B cell (primary cell): ENCODE measurements at regions of chr3 and their contacts with region 1.

Region 1: GRCh38 chr3:114213627-114214541 is 23.5 kb downstream of the ZNF80 start:
- DNase-seq: peak; percentile 92
- ATAC-seq: peak; percentile 76
- H3K4me3 ChIP-seq: peak overlapping the region; percentile 42 to 76 (median 69)
- H3K4me3 Mint-ChIP-seq: no peak overlapping the region
- H3K27ac ChIP-seq: peak overlapping the region; percentile 95 to 98
- H3K27ac Mint-ChIP-seq: no peak overlapping the region
- H3K4me1 ChIP-seq: peaks cover 66 to 71% of the 10 kb centered on the region in 2 donors
- H3K4me1 Mint-ChIP-seq: peaks cover 28% of the 10 kb centered on the region
- H3K27me3 ChIP-seq: no peaks in the 10 kb centered on the region
- H3K27me3 Mint-ChIP-seq: no peaks in the 10 kb centered on the region
- CTCF ChIP-seq: no peak

Region 2: GRCh38 chr3:113531826-113532697 is 681.8 kb before region 1 on chr3 and contains the start of gene SIDT1:
- CTCF ChIA-PET with region 1: no interaction called
- POLR2A ChIA-PET with region 1: no interaction called
- intact Hi-C with region 1: loop called (anchors 5 kb)
- DNase-seq: peak; percentile 89
- ATAC-seq: peak; percentile 81
- H3K4me3 ChIP-seq: peak within 1 kb of the TSS; percentile 86 to 96 (median 95)
- H3K4me3 Mint-ChIP-seq: peak within 1 kb of the TSS; percentile 93
- H3K27ac ChIP-seq: peak within 1 kb of the TSS; percentile 86 to 87
- H3K27ac Mint-ChIP-seq: peak within 1 kb of the TSS; percentile 96
- H3K4me1 ChIP-seq: peaks cover 35 to 36% of the 10 kb centered on the region in 2 donors
- H3K4me1 Mint-ChIP-seq: peaks cover 46% of the 10 kb centered on the region
- H3K27me3 ChIP-seq: no peaks in the 10 kb centered on the region
- H3K27me3 Mint-ChIP-seq: peaks cover 6% of the 10 kb centered on the region
- CTCF ChIP-seq: no peak
- total RNA-seq, gene SIDT1: 75.4 and 84.4 TPM in 2 replicates

Region 3: DNA sequence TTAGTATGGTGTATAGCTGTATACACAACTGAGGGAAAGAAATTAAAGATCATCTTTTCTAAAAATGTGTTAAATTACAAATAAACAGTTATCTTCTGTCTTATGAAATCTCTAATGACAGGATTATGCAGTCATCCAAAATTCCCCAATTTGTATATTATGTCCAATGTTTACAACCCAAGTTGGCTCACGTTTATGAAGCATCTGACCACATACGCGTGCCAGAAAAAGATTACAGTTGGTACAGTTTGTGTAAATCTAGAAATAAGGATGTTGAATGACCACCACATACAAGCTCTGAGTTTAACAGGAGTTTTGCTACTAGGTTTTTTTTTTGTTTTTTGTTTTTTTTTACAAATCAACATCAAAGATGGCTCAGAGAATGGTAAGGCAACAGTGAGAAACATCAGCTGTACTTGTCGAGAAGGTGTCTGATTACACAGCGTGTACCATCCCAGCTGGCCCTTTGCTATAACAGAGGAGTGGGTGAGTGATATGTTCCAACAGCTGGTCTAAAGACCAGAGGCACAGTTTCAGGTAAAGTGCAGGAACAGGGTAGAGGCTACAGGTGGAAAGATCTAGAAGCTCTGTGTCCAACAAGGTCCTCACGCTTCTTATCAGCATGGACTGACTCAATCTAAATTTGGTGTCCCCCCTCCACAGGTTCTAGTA is 564.6 kb before region 1 on chr3:
- CTCF ChIA-PET with region 1: no interaction called
- POLR2A ChIA-PET with region 1: no interaction called
- intact Hi-C with region 1: no loop called
- DNase-seq: no peak
- ATAC-seq: no peak
- H3K4me3 ChIP-seq: no peak overlapping the region
- H3K4me3 Mint-ChIP-seq: no peak overlapping the region
- H3K27ac ChIP-seq: no peak overlapping the region
- H3K27ac Mint-ChIP-seq: no peak overlapping the region
- H3K4me1 ChIP-seq: no peaks in the 10 kb centered on the region
- H3K4me1 Mint-ChIP-seq: peaks cover 21% of the 10 kb centered on the region
- H3K27me3 ChIP-seq: no peaks in the 10 kb centered on the region
- H3K27me3 Mint-ChIP-seq: no peaks in the 10 kb centered on the region
- CTCF ChIP-seq: no peak

Region 4: GRCh38 chr3:113832477-113833164 is 381.3 kb before region 1 on chr3:
- CTCF ChIA-PET with region 1: no interaction called
- POLR2A ChIA-PET with region 1: interaction called, 6 read pairs
- intact Hi-C with region 1: loop called (anchors 1 kb)
- DNase-seq: peak; percentile 23
- ATAC-seq: no peak
- H3K4me3 ChIP-seq: peak overlapping the region in 1 of 5 experiments; percentile 3
- H3K4me3 Mint-ChIP-seq: peak overlapping the region; percentile 20
- H3K27ac ChIP-seq: peak overlapping the region; percentile 43 to 59
- H3K27ac Mint-ChIP-seq: peak overlapping the region; percentile 56
- H3K4me1 ChIP-seq: peaks cover 49 to 50% of the 10 kb centered on the region in 2 donors
- H3K4me1 Mint-ChIP-seq: peaks cover 61% of the 10 kb centered on the region
- H3K27me3 ChIP-seq: no peaks in the 10 kb centered on the region
- H3K27me3 Mint-ChIP-seq: no peaks in the 10 kb centered on the region
- CTCF ChIP-seq: no peak

Region 5: GRCh38 chr3:113968986-113969385 is 244.9 kb before region 1 on chr3:
- CTCF ChIA-PET with region 1: no interaction called
- POLR2A ChIA-PET with region 1: no interaction called
- intact Hi-C with region 1: no loop called
- DNase-seq: no peak
- ATAC-seq: no peak
- H3K4me3 ChIP-seq: no peak overlapping the region
- H3K4me3 Mint-ChIP-seq: no peak overlapping the region
- H3K27ac ChIP-seq: no peak overlapping the region
- H3K27ac Mint-ChIP-seq: no peak overlapping the region
- H3K4me1 ChIP-seq: no peaks in the 10 kb centered on the region
- H3K4me1 Mint-ChIP-seq: peaks cover 4% of the 10 kb centered on the region
- H3K27me3 ChIP-seq: no peaks in the 10 kb centered on the region
- H3K27me3 Mint-ChIP-seq: no peaks in the 10 kb centered on the region
- CTCF ChIP-seq: no peak

Region 6: DNA sequence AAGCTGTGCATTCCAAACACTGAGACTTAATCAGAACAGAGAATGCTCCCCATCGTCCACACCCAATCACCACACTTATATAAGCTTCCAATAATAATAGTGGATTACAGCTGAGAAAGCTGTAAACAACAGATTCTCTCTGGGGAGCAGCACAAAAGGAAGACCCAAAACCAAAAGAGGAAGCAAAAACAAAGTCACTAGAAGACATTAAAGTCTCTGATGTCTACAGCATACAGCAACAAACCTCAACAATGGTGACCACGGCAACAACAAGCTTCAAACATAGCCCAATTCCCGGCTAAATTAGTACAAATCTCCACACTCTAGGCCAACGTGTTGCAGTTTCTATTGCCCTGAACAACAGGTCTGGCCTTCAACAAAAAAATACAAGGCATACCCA is 228.3 kb before region 1 on chr3:
- CTCF ChIA-PET with region 1: no interaction called
- POLR2A ChIA-PET with region 1: interaction called, 9 read pairs
- intact Hi-C with region 1: loop called (anchors 1 kb)
- DNase-seq: peak; percentile 84
- ATAC-seq: peak; percentile 94
- H3K4me3 ChIP-seq: peak overlapping the region in 4 of 5 experiments; percentile 4 to 34 (median 5)
- H3K4me3 Mint-ChIP-seq: peak overlapping the region; percentile 79
- H3K27ac ChIP-seq: peak overlapping the region; percentile 97 to 98
- H3K27ac Mint-ChIP-seq: peak overlapping the region; percentile 98
- H3K4me1 ChIP-seq: peaks cover 39 to 43% of the 10 kb centered on the region in 2 donors
- H3K4me1 Mint-ChIP-seq: peaks cover 58% of the 10 kb centered on the region
- H3K27me3 ChIP-seq: no peaks in the 10 kb centered on the region
- H3K27me3 Mint-ChIP-seq: no peaks in the 10 kb centered on the region
- CTCF ChIP-seq: no peak

Region 7: DNA sequence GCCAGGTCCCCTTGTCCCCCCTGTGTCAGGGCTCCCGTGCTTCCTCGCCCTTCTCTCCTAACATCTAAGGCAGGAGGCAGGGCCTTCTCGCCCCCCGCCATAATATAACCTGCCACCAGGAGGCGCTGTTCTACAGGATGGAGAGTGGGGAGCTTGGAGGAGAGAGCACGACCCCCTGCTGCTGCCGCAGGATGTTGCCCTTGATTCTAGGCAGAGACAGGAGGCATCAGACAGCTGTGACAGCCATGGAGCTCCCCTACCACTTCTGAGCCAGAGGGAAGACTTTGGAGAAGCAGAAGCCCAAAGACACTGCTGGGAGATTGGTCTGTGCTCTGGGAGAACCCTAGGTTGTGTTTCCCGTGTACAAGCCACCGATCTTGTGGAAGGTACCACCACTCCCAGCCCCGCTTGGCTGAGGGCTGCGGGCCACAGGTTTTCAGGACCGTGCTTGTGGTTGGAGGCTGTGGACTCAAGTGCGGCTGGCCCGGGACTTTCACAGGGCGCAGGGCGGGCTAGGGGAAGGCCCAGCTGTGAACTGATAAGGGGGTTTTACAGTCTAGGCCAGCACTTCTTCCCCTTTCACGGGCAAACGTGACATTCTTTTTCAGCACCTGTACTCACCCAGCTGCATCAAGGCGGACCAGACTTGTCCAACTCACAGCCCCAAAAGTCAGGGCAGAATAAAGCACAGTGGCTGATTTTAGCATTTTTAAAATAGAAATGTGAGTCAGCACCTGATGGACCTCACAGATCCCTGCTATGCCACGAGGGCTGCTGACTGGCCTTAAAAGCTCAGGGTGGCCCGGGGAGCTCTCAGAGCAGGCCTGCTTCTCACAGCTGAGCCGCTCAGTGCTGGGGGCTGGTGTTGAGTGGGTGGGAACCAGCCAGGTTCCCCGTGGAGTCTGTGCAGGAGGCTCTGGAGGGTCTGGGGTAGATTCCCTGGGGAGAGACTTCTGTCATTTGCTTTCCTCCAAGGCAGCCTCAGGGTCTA is 77.3 kb after region 1 on chr3:
- CTCF ChIA-PET with region 1: interaction called, 57 read pairs
- POLR2A ChIA-PET with region 1: interaction called, 40 read pairs
- intact Hi-C with region 1: loop called (anchors 1 kb)
- DNase-seq: peak; percentile 94
- ATAC-seq: peak; percentile 86
- H3K4me3 ChIP-seq: peak overlapping the region in 2 of 5 experiments; percentile 33 to 40
- H3K4me3 Mint-ChIP-seq: peak overlapping the region; percentile 83
- H3K27ac ChIP-seq: peak overlapping the region; percentile 93
- H3K27ac Mint-ChIP-seq: peak overlapping the region; percentile 97
- H3K4me1 ChIP-seq: peaks cover 13 to 18% of the 10 kb centered on the region in 2 donors
- H3K4me1 Mint-ChIP-seq: peaks cover 30% of the 10 kb centered on the region
- H3K27me3 ChIP-seq: no peaks in the 10 kb centered on the region
- H3K27me3 Mint-ChIP-seq: no peaks in the 10 kb centered on the region
- CTCF ChIP-seq: peak; percentile 92